Activated T-helper 2 cell treated with anti-CD3 and anti-CD28 coated beads, Interferon-gamma antibody, Interleukin-2, Interleukin-4, amounts not matched to agents 10 μg/mL and 5 μg/mL and 100 μg/mL, durations not matched to agents 14 hours and 24 hours and 36 hours (primary cell): ENCODE measurements at regions of chr1 and their contacts with region 1.

Region 1: DNA sequence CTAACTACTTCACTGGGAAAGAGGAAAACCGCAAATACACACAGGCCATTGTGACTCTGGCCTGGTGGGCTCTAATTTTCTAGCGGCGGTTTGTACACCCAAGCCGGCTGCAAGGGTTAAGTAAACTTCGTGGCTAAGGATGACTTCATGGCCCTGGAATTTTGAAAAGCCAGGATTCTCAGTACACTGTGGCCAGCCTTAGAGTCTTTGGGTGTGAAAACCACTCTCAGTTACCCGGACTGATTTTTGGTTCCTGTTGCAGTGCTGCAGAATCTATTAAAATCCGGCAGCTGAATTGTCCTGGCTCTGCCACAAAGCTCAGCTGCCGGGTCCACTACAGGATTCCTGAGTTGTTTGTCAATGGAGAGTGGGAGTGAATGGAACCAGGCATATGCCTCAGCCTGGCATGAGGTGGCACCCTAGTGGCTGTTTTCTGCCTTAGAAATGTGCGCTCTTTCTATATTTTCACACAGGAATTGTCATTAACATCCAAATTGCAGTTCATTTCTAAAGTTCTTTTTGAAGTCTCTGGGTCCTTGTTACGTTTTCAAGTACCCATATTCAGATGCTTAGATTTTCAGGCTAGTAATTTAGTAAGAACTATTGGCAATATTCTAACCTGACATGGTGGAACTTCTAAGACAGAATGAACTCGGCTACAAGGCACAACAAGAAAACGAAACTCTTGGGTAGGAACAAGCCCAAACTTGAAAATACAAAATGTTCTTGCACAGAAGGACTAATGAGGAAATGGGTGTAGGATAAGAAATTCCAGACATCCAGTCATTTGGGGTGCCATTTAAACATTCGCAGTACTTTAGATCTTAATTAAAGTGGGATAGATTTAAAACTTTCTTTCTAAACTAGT is 255.9 kb downstream of the NFIA start:
- DNase-seq: no peak
- H3K4me3 Mint-ChIP-seq: no peak overlapping the region
- H3K27ac Mint-ChIP-seq: no peak overlapping the region
- H3K4me1 Mint-ChIP-seq: no peaks in the 10 kb centered on the region
- H3K27me3 Mint-ChIP-seq: peaks cover 49% of the 10 kb centered on the region

Region 2: DNA sequence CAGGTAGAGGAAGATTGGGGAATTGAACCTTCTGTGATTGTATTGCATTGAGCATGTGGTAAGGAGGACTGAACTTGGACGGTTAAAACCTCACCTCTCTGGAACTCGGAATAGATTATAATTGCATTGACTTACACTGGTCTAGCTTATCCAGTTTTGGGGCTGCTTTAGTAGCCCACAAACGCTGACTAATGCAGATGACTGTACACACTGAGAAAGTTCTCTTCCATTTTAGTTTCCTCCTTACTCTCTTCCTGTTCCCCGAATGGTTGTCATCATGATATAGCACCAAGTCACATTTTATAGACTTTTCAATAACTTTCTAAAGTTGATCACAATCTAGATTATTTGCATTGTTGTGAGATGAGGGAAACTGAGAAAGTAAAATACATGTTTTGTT is 177.7 kb before region 1 on chr1:
- intact Hi-C with region 1: loop called (anchors 10 kb)
- DNase-seq: no peak
- H3K4me3 Mint-ChIP-seq: no peak overlapping the region
- H3K27ac Mint-ChIP-seq: no peak overlapping the region
- H3K4me1 Mint-ChIP-seq: peaks cover 7% of the 10 kb centered on the region
- H3K27me3 Mint-ChIP-seq: peaks cover 29% of the 10 kb centered on the region